K562 (cell line): ENCODE measurements at regions of chr6 and their contacts with region 1.

Region 1: GRCh38 chr6:121319112-121319553 is 15.1 kb downstream of the TBC1D32 start:
- DNase-seq: peak in 1 of 4 experiments; percentile 13
- ATAC-seq: peak; percentile 70
- H3K4me3 ChIP-seq: no peak overlapping the region
- H3K27ac ChIP-seq: no peak overlapping the region
- H3K4me1 ChIP-seq: no peaks in the 10 kb centered on the region
- H3K27me3 ChIP-seq: no peaks in the 10 kb centered on the region
- CTCF ChIP-seq: peak in 2 of 3 experiments; percentile 28 to 35; a peak in 3 of 6 replicates
- EP300 ChIP-seq: no peak
- POLR2A ChIP-seq: no peak
- RAD21 ChIP-seq: no peak; a peak in 1 of 4 replicates

Region 2: GRCh38 chr6:121399966-121400365 is 80.8 kb after region 1 on chr6:
- CTCF ChIA-PET with region 1: no interaction called
- POLR2A ChIA-PET with region 1: no interaction called
- in situ Hi-C with region 1: no loop called
- intact Hi-C with region 1: loop called (anchors 5 kb)
- DNase-seq: no peak
- ATAC-seq: no peak
- H3K4me3 ChIP-seq: no peak overlapping the region
- H3K27ac ChIP-seq: no peak overlapping the region
- H3K4me1 ChIP-seq: no peaks in the 10 kb centered on the region
- H3K27me3 ChIP-seq: no peaks in the 10 kb centered on the region
- CTCF ChIP-seq: no peak
- EP300 ChIP-seq: no peak
- POLR2A ChIP-seq: no peak
- RAD21 ChIP-seq: no peak

Region 3: DNA sequence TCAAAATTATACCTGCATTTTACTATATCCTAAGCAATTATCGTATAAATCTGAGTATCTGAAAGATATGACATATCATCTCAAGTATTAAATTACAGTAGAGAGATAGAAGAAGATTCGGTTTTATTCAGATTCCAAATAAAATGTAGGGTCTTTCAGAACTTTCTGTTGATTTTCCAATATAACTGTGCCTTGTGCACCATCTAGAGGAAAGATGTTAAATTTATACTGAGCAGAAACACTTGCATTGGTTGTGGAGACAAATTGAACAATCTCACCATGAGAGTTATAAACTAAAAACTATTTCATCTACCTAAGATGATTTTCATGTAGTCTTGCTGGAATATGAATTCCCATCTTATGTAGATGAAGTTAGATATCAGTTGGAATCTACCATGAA is 1053.5 kb after region 1 on chr6:
- CTCF ChIA-PET with region 1: no interaction called
- POLR2A ChIA-PET with region 1: no interaction called
- in situ Hi-C with region 1: no loop called
- intact Hi-C with region 1: loop called (anchors 10 kb)
- DNase-seq: no peak
- ATAC-seq: no peak
- H3K4me3 ChIP-seq: no peak overlapping the region
- H3K27ac ChIP-seq: no peak overlapping the region
- H3K4me1 ChIP-seq: no peaks in the 10 kb centered on the region
- H3K27me3 ChIP-seq: no peaks in the 10 kb centered on the region
- CTCF ChIP-seq: peak in 1 of 3 experiments; percentile 33; a peak in 2 of 6 replicates
- EP300 ChIP-seq: no peak
- POLR2A ChIP-seq: no peak
- RAD21 ChIP-seq: peak in 1 of 2 experiments; percentile 38; a peak in 1 of 4 replicates